ENCODE measurements at regions of chr5 and their contacts with region 1.

Region 1: GRCh38 chr5:141618804-141619554 is at the start of gene DIAPH1:
- DNase-seq: peak; percentile 94

Region 2: GRCh38 chr5:141598391-141599350 is 20.3 kb before region 1 on chr5:
- CTCF ChIA-PET with region 1: interaction called, 98 read pairs
- POLR2A ChIA-PET with region 1: interaction called, 30 read pairs
- DNase-seq: no peak

Region 3: GRCh38 chr5:141608557-141608956 is 10.4 kb before region 1 on chr5:
- CTCF ChIA-PET with region 1: interaction called, 10 read pairs
- POLR2A ChIA-PET with region 1: interaction called, 4 read pairs
- DNase-seq: no peak

Region 4: DNA sequence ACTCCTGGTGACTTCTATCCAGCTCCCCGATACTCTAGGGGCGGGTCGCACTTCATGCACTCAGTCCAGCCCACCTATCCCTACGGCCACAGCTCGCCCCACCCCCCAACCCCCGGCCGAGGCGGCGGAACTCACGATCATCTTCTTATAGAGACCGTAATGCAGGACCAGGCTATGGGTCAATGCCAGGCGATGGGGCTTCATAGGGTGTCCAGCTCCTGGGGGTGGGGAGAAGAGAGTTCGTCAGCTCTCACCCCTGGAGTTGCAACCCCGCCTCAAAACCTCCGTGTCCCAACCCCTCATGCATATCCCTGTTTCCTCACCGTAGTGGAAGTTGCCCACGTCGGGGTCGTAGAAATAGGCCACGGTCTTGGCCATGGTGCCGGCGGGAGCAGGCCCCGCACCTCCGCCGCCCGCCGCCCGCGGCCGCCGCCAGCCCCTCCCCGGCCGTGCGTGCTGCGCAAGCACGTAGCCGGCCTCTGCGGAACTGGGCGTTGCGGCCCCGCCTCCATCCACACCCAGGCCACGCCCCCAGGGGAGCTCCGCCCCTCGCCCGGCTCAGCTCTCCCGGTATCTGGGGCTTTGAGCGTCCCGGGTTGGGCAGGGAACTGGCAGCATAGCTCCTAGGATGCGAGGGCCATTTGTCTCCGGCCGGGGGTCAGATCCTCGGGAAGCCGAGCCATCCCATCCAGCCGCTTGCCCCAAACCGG is 17.6 kb after region 1 on chr5 and contains the starts of genes HDAC3 and RELL2:
- CTCF ChIA-PET with region 1: interaction called, 101 read pairs
- POLR2A ChIA-PET with region 1: interaction called, 61 read pairs
- DNase-seq: peak; percentile 98

Region 5: GRCh38 chr5:141734501-141735230 is 115.7 kb after region 1 on chr5:
- CTCF ChIA-PET with region 1: no interaction called
- POLR2A ChIA-PET with region 1: no interaction called
- DNase-seq: peak; percentile 71

Measured in HEK293T (cell line).